HEK293 (cell line): ENCODE measurements at regions of chr10 and their contacts with region 1.

Region 1: DNA sequence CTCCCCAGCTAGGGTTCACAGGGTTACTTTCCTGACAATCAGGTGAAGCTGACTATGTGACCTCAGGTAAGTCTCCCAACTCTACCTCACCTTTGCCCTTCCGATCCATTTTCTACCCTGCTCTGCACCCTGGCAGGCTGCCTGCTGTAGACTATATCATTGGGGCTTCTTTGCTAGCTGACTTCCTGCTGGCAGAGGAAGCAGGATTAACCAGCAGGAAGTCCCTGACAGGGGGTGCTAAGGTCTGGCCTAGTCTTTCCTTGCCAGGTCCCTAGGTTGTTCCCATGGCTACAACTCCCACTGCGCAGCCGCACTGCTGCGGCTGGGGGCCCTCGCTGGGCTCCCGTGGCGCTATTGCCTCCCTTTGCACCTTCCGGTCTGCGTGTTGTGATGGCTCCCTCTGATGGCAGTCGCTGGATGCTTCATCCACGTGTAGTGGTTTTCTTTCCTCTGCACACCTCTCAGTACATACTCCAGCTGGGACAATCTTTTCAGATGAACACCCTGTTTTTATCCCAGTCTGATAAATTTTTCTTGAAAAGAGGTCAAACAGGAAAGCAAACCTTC is 365.9 kb downstream of the REEP3 start:
- H3K4me3 ChIP-seq: no peak overlapping the region
- H3K27ac ChIP-seq: no peak overlapping the region
- H3K4me1 ChIP-seq: no peaks in the 10 kb centered on the region
- CTCF ChIP-seq: no peak

Region 2: DNA sequence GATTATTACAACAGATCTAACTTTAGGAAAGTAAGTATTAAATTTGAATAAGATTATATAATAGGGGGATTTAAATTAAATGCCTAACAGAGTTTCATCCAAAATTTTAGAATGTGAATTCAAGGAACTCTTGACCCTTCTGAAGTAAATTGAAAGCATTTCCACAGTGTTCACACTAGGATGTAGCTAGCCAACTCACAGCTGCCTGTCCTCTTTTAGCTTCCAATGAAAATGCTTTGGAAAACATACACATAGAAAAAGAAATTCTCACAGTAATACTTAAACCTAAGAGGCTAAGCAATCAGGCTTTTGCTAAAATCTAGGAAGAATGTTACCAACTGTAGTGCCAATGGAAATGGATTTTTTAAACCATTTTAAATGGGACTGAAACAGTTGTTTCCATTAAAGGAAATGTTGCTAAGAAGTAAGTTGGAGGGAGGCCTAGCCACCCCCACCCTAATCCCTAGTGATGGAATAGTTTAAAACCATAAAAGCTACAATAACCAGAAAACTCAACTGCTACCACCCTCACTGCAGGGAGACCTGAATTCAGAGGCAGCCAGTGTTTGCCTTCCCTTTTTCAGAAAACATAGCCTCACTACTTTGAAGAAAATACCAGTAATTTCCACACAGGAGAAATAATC is 307.6 kb before region 1 on chr10:
- CTCF ChIA-PET with region 1: no interaction called
- POLR2A ChIA-PET with region 1: no interaction called
- H3K4me3 ChIP-seq: no peak overlapping the region
- H3K27ac ChIP-seq: no peak overlapping the region
- H3K4me1 ChIP-seq: peaks cover 2% of the 10 kb centered on the region
- CTCF ChIP-seq: no peak

Region 3: GRCh38 chr10:63770519-63770918 is 116.6 kb before region 1 on chr10:
- CTCF ChIA-PET with region 1: no interaction called
- POLR2A ChIA-PET with region 1: no interaction called
- H3K4me3 ChIP-seq: no peak overlapping the region
- H3K27ac ChIP-seq: no peak overlapping the region
- H3K4me1 ChIP-seq: no peaks in the 10 kb centered on the region
- CTCF ChIP-seq: no peak

Region 4: GRCh38 chr10:63901228-63901627 is 14.1 kb after region 1 on chr10:
- CTCF ChIA-PET with region 1: interaction called, 11 read pairs
- POLR2A ChIA-PET with region 1: no interaction called
- H3K4me3 ChIP-seq: no peak overlapping the region
- H3K27ac ChIP-seq: no peak overlapping the region
- H3K4me1 ChIP-seq: no peaks in the 10 kb centered on the region
- CTCF ChIP-seq: no peak; the same call in 1 of the 2 replicates